ENCODE measurements at regions of chr15 and their contacts with region 1.

Region 1: DNA sequence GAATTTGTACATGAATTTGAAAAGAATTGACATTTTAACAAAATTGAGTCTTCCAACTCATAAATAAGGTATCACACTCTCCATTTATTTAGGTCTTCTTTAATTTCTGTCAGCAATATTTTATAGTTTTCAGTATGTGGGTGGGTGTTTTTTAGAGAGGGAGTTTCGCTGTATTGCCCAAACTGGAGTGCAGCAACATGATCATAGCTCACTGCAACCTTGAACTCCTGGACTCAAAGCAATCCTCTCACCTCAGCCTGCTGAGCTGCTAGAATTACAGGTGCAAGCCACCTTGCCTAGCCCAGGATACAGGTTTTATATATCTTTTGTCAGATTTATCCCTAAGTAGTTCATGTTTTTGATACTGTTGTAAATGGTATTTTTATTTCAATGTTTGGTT is 4.6 kb downstream of the WDR93 start:
- DNase-seq: no peak
- H3K4me3 ChIP-seq: no peak overlapping the region
- H3K27ac ChIP-seq: no peak overlapping the region
- H3K4me1 ChIP-seq: peaks cover under 1 to 4% (median 3%) of the 10 kb centered on the region in 4 donors
- H3K27me3 ChIP-seq: no peaks in the 10 kb centered on the region
- CTCF ChIP-seq: no peak
- EP300 ChIP-seq: no peak
- POLR2A ChIP-seq: no peak

Region 2: GRCh38 chr15:89642106-89642505 is 53.1 kb before region 1 on chr15:
- intact Hi-C with region 1: loop called (anchors 5 kb)
- DNase-seq: peak in 1 of 2 donors; percentile 13
- H3K4me3 ChIP-seq: no peak overlapping the region
- H3K27ac ChIP-seq: no peak overlapping the region
- H3K4me1 ChIP-seq: peaks cover 0 to 4% (median 2%) of the 10 kb centered on the region in 4 donors
- H3K27me3 ChIP-seq: no peaks in the 10 kb centered on the region
- CTCF ChIP-seq: no peak
- EP300 ChIP-seq: no peak
- POLR2A ChIP-seq: no peak

Region 3: DNA sequence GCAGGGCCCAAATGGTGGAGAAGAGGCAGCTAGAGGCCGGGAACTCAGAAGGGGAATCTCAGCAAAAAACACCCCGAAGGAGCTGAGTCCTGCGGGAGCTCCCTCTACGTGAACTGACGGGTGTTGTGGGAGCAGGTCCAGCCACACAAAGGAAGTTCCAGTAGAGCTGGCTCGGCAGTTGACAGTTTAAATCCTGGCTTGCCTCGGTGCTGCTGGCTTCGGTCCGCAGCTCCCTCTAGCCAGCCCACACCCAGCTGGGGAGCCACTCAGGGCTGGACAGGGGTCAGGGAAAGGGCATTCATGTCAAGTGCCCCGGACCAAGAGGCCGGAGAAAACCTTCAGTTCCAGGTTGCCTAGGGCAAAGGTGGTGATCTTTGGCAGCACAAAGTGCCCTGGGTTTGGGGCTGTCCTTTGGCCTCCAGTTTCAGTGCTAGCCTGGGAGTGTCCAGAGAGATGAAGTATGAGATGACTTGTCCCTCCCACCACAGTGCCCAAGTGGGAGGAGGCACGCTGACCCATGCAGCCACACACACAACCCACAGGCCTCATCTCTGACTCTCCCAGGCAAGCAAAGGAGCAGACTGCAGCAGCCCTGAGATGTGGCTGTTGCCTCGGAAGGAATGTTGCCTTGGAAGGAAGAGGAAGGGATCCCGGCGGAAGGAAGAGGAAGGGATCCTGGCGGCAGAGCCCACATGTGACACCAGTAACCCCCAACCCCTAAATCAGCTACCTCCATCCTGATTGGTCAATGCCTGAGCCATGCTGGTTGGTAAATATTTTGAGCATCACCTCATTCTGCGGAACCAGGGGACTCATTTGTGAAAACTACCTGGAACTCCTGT is 133.3 kb after region 1 on chr15:
- intact Hi-C with region 1: no loop called
- DNase-seq: peak; percentile 57 to 63
- H3K4me3 ChIP-seq: no peak overlapping the region
- H3K27ac ChIP-seq: peak overlapping the region; percentile 22 to 67 (median 58)
- H3K4me1 ChIP-seq: peaks cover 13 to 31% (median 20%) of the 10 kb centered on the region in 4 donors
- H3K27me3 ChIP-seq: no peaks in the 10 kb centered on the region
- CTCF ChIP-seq: no peak
- EP300 ChIP-seq: no peak
- POLR2A ChIP-seq: no peak

Measured in stomach (tissue), 19 donors.